Activated naive CD4-positive, alpha-beta T cell treated with anti-CD3 and anti-CD28 coated beads for 36 hours (primary cell): ENCODE measurements at regions of chr14 and their contacts with region 1.

Region 1: DNA sequence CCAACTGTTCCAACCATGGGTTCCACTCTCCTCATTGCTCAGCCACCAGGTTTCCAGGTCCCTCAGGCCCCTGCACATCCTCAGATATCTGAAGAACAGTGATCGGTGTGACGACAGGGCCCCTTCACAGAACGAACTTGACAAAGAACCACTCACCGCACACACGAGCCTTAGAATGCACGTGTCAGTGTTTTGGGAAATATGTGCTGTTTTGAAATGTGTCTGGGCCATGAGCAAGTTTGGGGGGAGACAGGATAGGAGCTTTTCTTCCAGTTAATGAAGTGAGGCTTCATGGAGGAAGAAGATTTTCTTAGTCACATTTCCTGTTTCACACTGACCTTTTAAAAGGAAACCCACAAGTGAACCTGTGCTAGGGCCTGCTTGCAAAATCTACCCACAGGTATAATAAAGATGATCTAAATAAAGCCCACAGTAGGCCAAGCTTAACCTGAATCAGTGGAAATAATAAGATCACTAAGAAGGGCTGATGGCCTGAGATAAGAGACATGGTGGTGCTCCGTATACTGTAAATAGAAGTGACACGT is 58.6 kb downstream of the ZFP36L1 start:
- DNase-seq: peak; percentile 56
- H3K4me3 Mint-ChIP-seq: no peak overlapping the region
- H3K27ac Mint-ChIP-seq: peak overlapping the region; percentile 55
- H3K4me1 Mint-ChIP-seq: peaks cover 26% of the 10 kb centered on the region
- H3K27me3 Mint-ChIP-seq: no peaks in the 10 kb centered on the region

Region 2: DNA sequence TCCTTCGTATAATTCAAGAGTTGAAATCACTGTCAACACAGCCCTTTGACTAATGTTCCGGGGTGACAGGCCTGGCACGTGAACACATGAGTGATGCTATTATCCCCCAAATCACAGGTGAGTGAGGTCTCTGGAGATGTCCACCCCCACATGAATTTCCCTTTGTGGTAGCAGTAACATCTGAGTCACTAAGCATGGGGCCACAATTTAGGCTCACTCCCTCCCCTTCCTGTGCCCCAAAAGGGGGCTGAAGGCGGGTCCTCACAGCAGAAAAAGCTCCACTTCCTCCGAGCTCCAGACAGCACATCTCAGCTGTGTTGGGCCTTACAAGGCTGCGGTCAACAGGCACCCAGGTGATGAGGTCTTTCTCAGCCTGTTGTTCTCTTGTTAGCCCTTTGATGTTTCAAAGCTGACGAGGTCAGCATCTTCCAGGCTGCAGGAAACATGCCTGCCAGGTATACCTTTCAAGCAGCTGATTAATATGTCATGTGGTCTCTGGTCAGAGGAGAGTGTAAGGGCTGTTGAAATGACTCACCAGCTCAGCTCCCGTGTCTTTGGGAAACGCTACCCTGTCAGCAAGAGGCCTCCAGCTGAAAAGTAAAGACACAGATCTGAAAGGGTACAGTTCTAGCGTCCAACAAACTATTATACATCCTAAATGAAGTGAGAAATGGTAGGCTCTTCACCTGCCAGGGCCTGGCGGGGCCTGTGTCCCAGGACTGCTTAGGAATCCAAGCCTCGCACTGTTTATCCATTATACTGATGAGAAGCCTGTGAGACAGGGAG is 48.7 kb before region 1 on chr14:
- CTCF ChIA-PET with region 1: interaction called, 3 read pairs
- intact Hi-C with region 1: loop called (anchors 1 kb)
- DNase-seq: peak; percentile 90
- H3K4me3 Mint-ChIP-seq: peak overlapping the region; percentile 19
- H3K27ac Mint-ChIP-seq: peak overlapping the region; percentile 91
- H3K4me1 Mint-ChIP-seq: peaks cover 54% of the 10 kb centered on the region
- H3K27me3 Mint-ChIP-seq: no peaks in the 10 kb centered on the region

Region 3: DNA sequence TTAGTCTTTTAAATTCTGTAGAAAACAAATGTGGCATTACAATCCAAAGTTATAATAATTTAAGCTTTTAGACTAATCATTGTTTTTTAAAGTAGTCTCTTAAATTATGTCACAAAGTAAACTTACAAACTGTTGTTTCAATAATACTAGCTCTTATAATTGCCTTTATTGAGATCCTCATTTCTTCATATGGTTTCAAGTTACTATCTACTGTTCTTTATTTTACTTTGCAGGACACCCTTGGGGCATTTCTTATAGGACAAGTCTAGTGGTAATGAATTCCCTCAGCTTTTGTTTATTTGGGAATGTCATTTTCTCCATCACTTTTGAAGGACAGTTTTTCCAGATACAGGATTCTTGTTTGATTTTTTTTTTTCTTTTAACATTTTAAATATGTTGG is 66.6 kb after region 1 on chr14:
- CTCF ChIA-PET with region 1: no interaction called
- intact Hi-C with region 1: no loop called
- DNase-seq: no peak
- H3K4me3 Mint-ChIP-seq: no peak overlapping the region
- H3K27ac Mint-ChIP-seq: no peak overlapping the region
- H3K4me1 Mint-ChIP-seq: peaks cover 58% of the 10 kb centered on the region
- H3K27me3 Mint-ChIP-seq: no peaks in the 10 kb centered on the region

Region 4: GRCh38 chr14:69226178-69226577 is 491.9 kb after region 1 on chr14:
- CTCF ChIA-PET with region 1: no interaction called
- intact Hi-C with region 1: no loop called
- DNase-seq: no peak
- H3K4me3 Mint-ChIP-seq: no peak overlapping the region
- H3K27ac Mint-ChIP-seq: no peak overlapping the region
- H3K4me1 Mint-ChIP-seq: no peaks in the 10 kb centered on the region
- H3K27me3 Mint-ChIP-seq: no peaks in the 10 kb centered on the region

Region 5: GRCh38 chr14:69346710-69347109 is 612.4 kb after region 1 on chr14:
- CTCF ChIA-PET with region 1: no interaction called
- intact Hi-C with region 1: no loop called
- DNase-seq: peak; percentile 40
- H3K4me3 Mint-ChIP-seq: no peak overlapping the region
- H3K27ac Mint-ChIP-seq: no peak overlapping the region
- H3K4me1 Mint-ChIP-seq: no peaks in the 10 kb centered on the region
- H3K27me3 Mint-ChIP-seq: no peaks in the 10 kb centered on the region

Region 6: GRCh38 chr14:69766984-69767368 is 1032.7 kb after region 1 on chr14 and contains the start of gene SRSF5:
- CTCF ChIA-PET with region 1: no interaction called
- intact Hi-C with region 1: no loop called
- DNase-seq: peak; percentile 95
- H3K4me3 Mint-ChIP-seq: peak within 1 kb of the TSS; percentile 97
- H3K27ac Mint-ChIP-seq: peak within 1 kb of the TSS; percentile 100
- H3K4me1 Mint-ChIP-seq: peaks cover 75% of the 10 kb centered on the region
- H3K27me3 Mint-ChIP-seq: no peaks in the 10 kb centered on the region
- total RNA-seq, gene SRSF5: 296 to 297 TPM